Motor neuron (in vitro differentiated cells): ENCODE measurements at regions of chr6 and their contacts with region 1.

Region 1: GRCh38 chr6:24064082-24064481 is 61.9 kb upstream of the NRSN1 start:
- ATAC-seq: peak in 4 of 8 experiments; percentile 47 to 71 (median 56)
- H3K4me3 ChIP-seq: no peak overlapping the region
- H3K27ac ChIP-seq: no peak overlapping the region
- H3K4me1 ChIP-seq: peaks cover 0 to 8% of the 10 kb centered on the region in 2 donors

Region 2: DNA sequence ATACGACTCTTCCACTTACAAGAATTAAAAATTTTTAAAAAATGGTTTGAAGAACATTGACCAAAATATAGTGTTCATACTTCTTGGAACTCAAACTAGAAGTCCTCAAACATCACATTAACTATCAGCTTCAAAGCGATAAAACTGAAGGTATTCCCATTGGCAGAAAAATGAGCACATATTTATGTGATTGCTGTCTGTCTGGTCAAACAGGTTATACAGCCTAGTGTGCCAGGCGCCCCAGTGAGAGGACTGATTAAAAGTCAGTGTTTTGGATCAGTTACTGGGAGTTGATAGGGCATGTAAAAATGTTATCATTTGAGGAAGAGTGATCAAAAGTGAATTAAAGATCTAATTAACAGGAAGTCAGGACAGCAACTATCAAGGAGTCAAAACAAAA is 755.9 kb before region 1 on chr6:
- in situ Hi-C with region 1: no loop called
- ATAC-seq: no peak
- H3K4me3 ChIP-seq: no peak overlapping the region
- H3K27ac ChIP-seq: no peak overlapping the region
- H3K4me1 ChIP-seq: no peaks in the 10 kb centered on the region

Region 3: GRCh38 chr6:24188578-24189080 is 124.5 kb after region 1 on chr6:
- in situ Hi-C with region 1: loop called in 1 of 9 experiments (anchors 25 kb)
- ATAC-seq: peak in 5 of 8 experiments; percentile 26 to 45 (median 37)
- H3K4me3 ChIP-seq: no peak overlapping the region
- H3K27ac ChIP-seq: no peak overlapping the region
- H3K4me1 ChIP-seq: peaks cover 17 to 44% of the 10 kb centered on the region in 2 donors

Region 4: GRCh38 chr6:24205020-24205492 is 141.0 kb after region 1 on chr6:
- in situ Hi-C with region 1: loop called in 2 of 9 experiments (anchors 10 to 25 kb)
- ATAC-seq: peak; percentile 32 to 85 (median 78)
- H3K4me3 ChIP-seq: no peak overlapping the region
- H3K27ac ChIP-seq: no peak overlapping the region
- H3K4me1 ChIP-seq: peaks cover 2 to 14% of the 10 kb centered on the region in 2 donors

Region 5: GRCh38 chr6:24274441-24275083 is 210.5 kb after region 1 on chr6:
- in situ Hi-C with region 1: loop called in 3 of 9 experiments (anchors 10 to 25 kb)
- ATAC-seq: peak in 1 of 8 experiments; percentile 21
- H3K4me3 ChIP-seq: no peak overlapping the region
- H3K27ac ChIP-seq: no peak overlapping the region
- H3K4me1 ChIP-seq: peaks cover 3 to 25% of the 10 kb centered on the region in 2 donors

Region 6: GRCh38 chr6:24394780-24395437 is 330.8 kb after region 1 on chr6:
- in situ Hi-C with region 1: loop called in 2 of 9 experiments (anchors 25 kb)
- ATAC-seq: peak in 2 of 8 experiments; percentile 99
- H3K4me3 ChIP-seq: no peak overlapping the region
- H3K27ac ChIP-seq: no peak overlapping the region
- H3K4me1 ChIP-seq: no peaks in the 10 kb centered on the region